Endothelial cell of umbilical vein (primary cell): ENCODE measurements at regions of chr19 and their contacts with region 1.

Region 1: DNA sequence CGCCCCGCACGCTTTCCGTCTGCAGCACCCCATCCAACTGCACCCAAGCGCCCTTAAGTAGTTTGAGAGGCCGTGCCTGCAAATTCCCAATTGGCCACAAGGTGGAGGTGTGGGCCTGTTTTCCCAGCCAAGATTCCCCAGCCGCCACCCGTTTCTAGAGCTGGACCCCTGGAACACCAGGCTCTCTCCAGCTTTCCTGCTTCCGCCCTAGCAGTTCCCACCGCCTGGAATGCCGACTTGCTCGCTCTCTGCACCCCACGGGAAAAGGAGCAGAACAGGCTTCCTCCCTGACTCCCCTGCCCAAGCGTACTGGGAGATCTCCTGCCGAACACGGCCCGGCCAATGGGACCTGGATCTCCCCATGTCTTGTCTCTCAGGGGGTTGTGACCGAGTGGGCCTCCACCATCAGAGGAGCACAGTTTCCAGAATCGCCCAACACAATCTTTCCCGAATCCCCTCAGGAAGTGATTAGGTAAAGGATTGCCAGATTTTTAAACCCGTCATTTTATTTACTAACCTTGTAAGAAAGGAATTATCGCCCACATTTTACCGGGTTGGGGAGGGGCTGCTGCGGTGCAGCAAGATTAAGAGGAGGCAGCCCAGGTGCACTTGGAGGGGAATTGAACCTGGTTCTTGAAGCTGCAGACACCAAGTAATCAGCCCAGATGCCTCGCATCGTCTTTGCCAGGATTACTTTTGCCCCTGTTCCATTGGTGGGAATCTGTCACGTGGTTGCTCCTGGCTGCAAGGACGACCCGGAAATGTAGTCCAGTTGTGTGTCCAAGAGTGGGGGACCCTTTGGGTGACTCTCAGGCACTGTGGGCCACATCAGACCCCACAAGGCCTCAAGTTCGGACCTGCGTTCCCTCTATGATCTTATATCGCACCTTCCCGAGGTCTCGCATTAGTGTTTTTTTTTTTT is 3.5 kb upstream of the NAPSA start:
- DNase-seq: peak; percentile 80
- H3K4me3 ChIP-seq: peak overlapping the region; percentile 20 to 53 (median 42)
- H3K27ac ChIP-seq: peak overlapping the region; percentile 19
- H3K4me1 ChIP-seq: peaks cover 5% of the 10 kb centered on the region
- H3K27me3 ChIP-seq: no peaks in the 10 kb centered on the region
- CTCF ChIP-seq: peak; percentile 71 to 84
- POLR2A ChIP-seq: no peak

Region 2: DNA sequence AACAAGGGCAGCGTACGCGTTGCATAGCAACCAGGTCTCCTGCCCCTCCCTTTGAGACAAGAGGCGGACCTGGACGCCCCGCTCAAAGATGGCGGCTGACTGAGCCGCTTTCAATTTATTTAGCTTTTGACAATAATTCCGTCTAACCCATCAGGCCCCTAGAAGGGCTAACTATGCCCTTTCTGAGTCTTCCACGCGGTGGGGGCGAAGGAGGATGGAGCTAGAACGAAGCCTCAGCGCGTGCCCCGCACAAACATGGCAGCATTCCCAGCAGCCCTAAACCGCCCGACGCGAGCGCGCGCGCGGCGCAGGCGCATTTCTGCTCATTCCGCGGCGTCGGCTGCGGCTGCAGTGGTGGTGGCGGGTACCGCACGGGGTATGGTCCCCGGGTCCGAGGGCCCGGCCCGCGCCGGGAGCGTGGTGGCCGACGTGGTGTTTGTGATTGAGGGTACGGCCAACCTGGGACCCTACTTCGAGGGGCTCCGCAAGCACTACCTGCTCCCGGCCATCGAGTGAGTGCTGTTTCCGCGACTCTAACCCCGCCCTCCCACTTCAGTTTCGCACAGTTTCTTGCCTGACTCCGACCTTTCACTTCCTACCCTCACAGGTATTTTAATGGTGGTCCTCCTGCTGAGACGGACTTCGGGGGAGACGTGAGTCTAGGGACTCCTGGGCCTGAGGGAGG is 550.8 kb before region 1 on chr19 and contains the start of gene MED25:
- CTCF ChIA-PET with region 1: no interaction called
- POLR2A ChIA-PET with region 1: no interaction called
- dilution Hi-C with region 1: no loop called
- intact Hi-C with region 1: no loop called
- DNase-seq: peak; percentile 93
- H3K4me3 ChIP-seq: peak within 1 kb of the TSS; percentile 83 to 95 (median 90)
- H3K27ac ChIP-seq: peak within 1 kb of the TSS; percentile 89
- H3K4me1 ChIP-seq: peaks cover 19% of the 10 kb centered on the region
- H3K27me3 ChIP-seq: no peaks in the 10 kb centered on the region
- CTCF ChIP-seq: peak in 1 of 2 donors; percentile 14
- POLR2A ChIP-seq: peak; percentile 75
- total RNA-seq, gene MED25: 55.8 and 62.9 TPM in 2 replicates

Region 3: DNA sequence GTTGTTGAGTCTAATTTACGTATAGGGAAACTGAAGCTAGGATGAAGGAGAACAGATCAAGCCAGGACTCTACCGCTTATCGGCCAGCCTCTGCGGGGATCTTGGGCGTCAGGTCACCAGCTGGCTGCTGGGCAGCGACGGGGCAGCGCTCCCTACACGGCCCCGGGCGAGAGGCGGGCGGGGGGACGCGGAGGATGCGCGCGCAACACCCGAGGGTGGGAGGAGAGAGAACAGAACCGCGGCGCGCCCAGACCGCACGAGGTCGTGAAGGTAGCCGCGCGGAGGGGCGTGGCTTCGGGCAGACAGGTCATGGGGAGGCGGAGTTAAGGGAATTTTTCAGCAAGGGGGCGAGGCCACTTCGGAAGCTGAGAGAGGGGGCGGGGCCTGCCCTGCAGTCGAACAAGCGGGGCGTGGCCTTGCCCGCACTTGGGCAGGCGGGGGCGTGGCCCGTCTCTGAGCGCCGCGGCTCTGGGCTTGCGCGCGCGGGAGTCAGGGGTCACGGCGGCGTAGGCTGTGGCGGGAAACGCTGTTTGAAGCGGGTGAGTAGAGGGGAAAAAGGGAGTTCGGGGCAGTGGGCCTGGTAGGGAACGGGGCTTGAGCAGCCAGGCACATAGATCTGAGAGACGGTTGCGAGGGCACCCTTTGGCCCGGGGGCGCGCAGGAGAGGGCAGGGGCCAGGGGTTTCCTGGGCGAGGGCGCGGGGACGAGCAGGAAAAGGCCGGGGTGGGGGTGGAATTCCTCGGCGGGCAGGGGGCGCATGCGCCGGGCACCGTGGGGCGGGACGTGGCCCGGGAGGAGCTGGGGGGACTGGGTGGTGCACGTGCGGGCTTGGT is 15.2 kb after region 1 on chr19 and contains the start of gene POLD1:
- CTCF ChIA-PET with region 1: interaction called, 12 read pairs
- POLR2A ChIA-PET with region 1: no interaction called
- dilution Hi-C with region 1: no loop called
- intact Hi-C with region 1: no loop called
- DNase-seq: peak; percentile 99
- H3K4me3 ChIP-seq: peak within 1 kb of the TSS; percentile 71 to 94 (median 80)
- H3K27ac ChIP-seq: peak within 1 kb of the TSS; percentile 63
- H3K4me1 ChIP-seq: peaks cover 16% of the 10 kb centered on the region
- H3K27me3 ChIP-seq: no peaks in the 10 kb centered on the region
- CTCF ChIP-seq: no peak
- POLR2A ChIP-seq: peak; percentile 79
- total RNA-seq, gene POLD1: 63.9 and 73.8 TPM in 2 replicates

Region 4: GRCh38 chr19:50409347-50409746 is 40.4 kb after region 1 on chr19:
- CTCF ChIA-PET with region 1: interaction called, 88 read pairs
- POLR2A ChIA-PET with region 1: no interaction called
- dilution Hi-C with region 1: no loop called
- intact Hi-C with region 1: loop called (anchors 1 kb)
- DNase-seq: no peak
- H3K4me3 ChIP-seq: no peak overlapping the region
- H3K27ac ChIP-seq: no peak overlapping the region
- H3K4me1 ChIP-seq: no peaks in the 10 kb centered on the region
- H3K27me3 ChIP-seq: no peaks in the 10 kb centered on the region
- CTCF ChIP-seq: no peak
- POLR2A ChIP-seq: no peak

Region 5: GRCh38 chr19:50461066-50461875 is 92.4 kb after region 1 on chr19:
- CTCF ChIA-PET with region 1: interaction called, 144 read pairs
- POLR2A ChIA-PET with region 1: no interaction called
- dilution Hi-C with region 1: no loop called
- intact Hi-C with region 1: loop called (anchors 1 kb)
- DNase-seq: peak; percentile 68
- H3K4me3 ChIP-seq: no peak overlapping the region
- H3K27ac ChIP-seq: no peak overlapping the region
- H3K4me1 ChIP-seq: no peaks in the 10 kb centered on the region
- H3K27me3 ChIP-seq: no peaks in the 10 kb centered on the region
- CTCF ChIP-seq: peak; percentile 81 to 82
- POLR2A ChIP-seq: no peak

Region 6: GRCh38 chr19:50500060-50500752 is 131.3 kb after region 1 on chr19:
- CTCF ChIA-PET with region 1: no interaction called
- POLR2A ChIA-PET with region 1: no interaction called
- dilution Hi-C with region 1: no loop called
- intact Hi-C with region 1: no loop called
- DNase-seq: no peak
- H3K4me3 ChIP-seq: no peak overlapping the region
- H3K27ac ChIP-seq: no peak overlapping the region
- H3K4me1 ChIP-seq: no peaks in the 10 kb centered on the region
- H3K27me3 ChIP-seq: no peaks in the 10 kb centered on the region
- CTCF ChIP-seq: peak; percentile 6 to 30
- POLR2A ChIP-seq: no peak

Region 7: DNA sequence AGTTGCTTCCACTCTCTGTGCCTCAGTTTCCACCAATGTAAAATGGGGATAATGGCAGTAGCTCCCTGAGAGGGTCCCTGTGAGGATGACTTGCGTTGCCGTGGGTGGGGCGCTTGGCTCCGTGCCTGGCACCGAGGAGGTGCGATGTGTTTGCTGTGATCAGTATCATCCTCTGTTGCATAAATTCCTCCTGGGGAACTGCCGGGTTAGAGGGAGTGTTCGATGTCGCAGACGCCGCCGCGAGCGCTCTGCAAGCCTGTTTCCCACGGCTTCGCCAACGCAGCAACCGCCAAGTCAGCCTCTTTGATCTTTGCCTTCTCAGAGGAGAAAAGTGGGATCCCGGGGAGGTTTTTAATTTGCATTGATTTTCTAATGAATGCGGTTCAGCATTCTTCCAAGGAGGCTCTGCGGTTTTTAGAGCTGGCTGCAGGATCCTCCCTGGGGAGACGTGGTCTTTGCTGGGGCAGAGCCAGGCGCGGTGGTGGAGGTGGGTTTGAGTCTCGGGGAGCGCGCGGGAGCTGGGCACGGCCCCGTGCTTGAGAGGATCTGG is 408.9 kb after region 1 on chr19:
- CTCF ChIA-PET with region 1: interaction called, 3 read pairs
- POLR2A ChIA-PET with region 1: no interaction called
- dilution Hi-C with region 1: no loop called
- intact Hi-C with region 1: loop called (anchors 1 kb)
- DNase-seq: no peak
- H3K4me3 ChIP-seq: no peak overlapping the region
- H3K27ac ChIP-seq: no peak overlapping the region
- H3K4me1 ChIP-seq: no peaks in the 10 kb centered on the region
- H3K27me3 ChIP-seq: peaks cover 26 to 29% of the 10 kb centered on the region in 2 experiments
- CTCF ChIP-seq: no peak
- POLR2A ChIP-seq: no peak